ENCODE measurements at regions of chr17 and their contacts with region 1.

Region 1: GRCh38 chr17:59914274-59914854 is 21.4 kb downstream of the RPS6KB1 start:
- DNase-seq: no peak
- ATAC-seq: no peak
- H3K4me3 Mint-ChIP-seq: no peak overlapping the region
- H3K27ac Mint-ChIP-seq: no peak overlapping the region
- H3K4me1 Mint-ChIP-seq: no peaks in the 10 kb centered on the region
- H3K27me3 Mint-ChIP-seq: no peaks in the 10 kb centered on the region
- CTCF ChIP-seq: peak; percentile 69

Region 2: GRCh38 chr17:59668816-59669215 is 245.5 kb before region 1 on chr17:
- CTCF ChIA-PET with region 1: no interaction called
- POLR2A ChIA-PET with region 1: no interaction called
- intact Hi-C with region 1: no loop called
- DNase-seq: no peak
- ATAC-seq: no peak
- H3K4me3 Mint-ChIP-seq: no peak overlapping the region
- H3K27ac Mint-ChIP-seq: peak overlapping the region; percentile 57
- H3K4me1 Mint-ChIP-seq: peaks cover 31% of the 10 kb centered on the region
- H3K27me3 Mint-ChIP-seq: no peaks in the 10 kb centered on the region
- CTCF ChIP-seq: no peak

Region 3: GRCh38 chr17:59829217-59830006 is 85.0 kb before region 1 on chr17:
- CTCF ChIA-PET with region 1: no interaction called
- POLR2A ChIA-PET with region 1: no interaction called
- intact Hi-C with region 1: no loop called
- DNase-seq: peak; percentile 72
- ATAC-seq: peak; percentile 78
- H3K4me3 Mint-ChIP-seq: peak overlapping the region; percentile 89
- H3K27ac Mint-ChIP-seq: peak overlapping the region; percentile 97
- H3K4me1 Mint-ChIP-seq: peaks cover 73% of the 10 kb centered on the region
- H3K27me3 Mint-ChIP-seq: no peaks in the 10 kb centered on the region
- CTCF ChIP-seq: no peak

Region 4: DNA sequence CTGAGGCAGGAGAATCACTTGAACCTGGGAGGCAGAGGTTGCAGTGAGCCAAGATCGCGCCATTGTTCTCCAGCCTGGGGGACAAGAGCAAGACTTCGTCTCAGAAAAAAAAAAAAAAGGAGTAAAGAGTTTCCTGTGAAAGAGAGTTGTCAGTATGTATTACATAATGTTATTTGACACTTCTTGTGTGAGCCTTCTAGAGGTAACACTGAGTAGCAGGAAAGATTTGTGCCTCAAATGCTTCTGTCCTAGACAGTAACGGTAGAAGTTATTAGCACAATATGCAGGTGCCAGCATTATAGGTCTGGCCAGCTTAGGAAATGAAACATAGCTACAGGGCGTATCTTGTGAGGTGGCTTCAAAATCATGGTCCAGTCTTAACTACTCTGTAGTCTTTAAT is 15.3 kb before region 1 on chr17:
- CTCF ChIA-PET with region 1: interaction called, 16 read pairs
- POLR2A ChIA-PET with region 1: interaction called, 3 read pairs
- intact Hi-C with region 1: no loop called
- DNase-seq: no peak
- ATAC-seq: peak; percentile 81
- H3K4me3 Mint-ChIP-seq: no peak overlapping the region
- H3K27ac Mint-ChIP-seq: no peak overlapping the region
- H3K4me1 Mint-ChIP-seq: peaks cover 48% of the 10 kb centered on the region
- H3K27me3 Mint-ChIP-seq: no peaks in the 10 kb centered on the region
- CTCF ChIP-seq: peak; percentile 33

Region 5: GRCh38 chr17:59941131-59941530 is 26.8 kb after region 1 on chr17:
- CTCF ChIA-PET with region 1: interaction called, 18 read pairs
- POLR2A ChIA-PET with region 1: no interaction called
- intact Hi-C with region 1: no loop called
- DNase-seq: no peak
- ATAC-seq: peak; percentile 56
- H3K4me3 Mint-ChIP-seq: no peak overlapping the region
- H3K27ac Mint-ChIP-seq: peak overlapping the region; percentile 91
- H3K4me1 Mint-ChIP-seq: peaks cover 37% of the 10 kb centered on the region
- H3K27me3 Mint-ChIP-seq: no peaks in the 10 kb centered on the region
- CTCF ChIP-seq: no peak

Region 6: DNA sequence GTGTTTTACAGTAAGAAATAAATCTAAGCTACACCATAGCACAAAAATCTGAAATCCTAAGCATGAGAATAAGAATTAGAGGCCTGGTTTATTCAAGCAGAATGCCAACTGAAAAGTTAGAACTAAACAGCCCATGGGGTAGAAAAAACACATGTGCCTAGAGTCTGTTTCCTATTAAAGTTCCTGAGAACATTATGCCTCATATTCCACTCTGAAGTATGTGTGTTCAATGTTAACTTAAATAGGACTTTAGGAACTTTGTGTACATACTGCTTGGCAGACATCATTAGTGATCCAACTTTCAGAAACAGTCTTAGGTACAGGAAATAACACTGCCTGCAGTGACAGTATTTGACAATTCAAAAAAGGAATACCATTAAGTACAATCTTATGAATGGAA is 146.1 kb after region 1 on chr17:
- CTCF ChIA-PET with region 1: no interaction called
- POLR2A ChIA-PET with region 1: no interaction called
- intact Hi-C with region 1: no loop called
- DNase-seq: no peak
- ATAC-seq: no peak
- H3K4me3 Mint-ChIP-seq: no peak overlapping the region
- H3K27ac Mint-ChIP-seq: no peak overlapping the region
- H3K4me1 Mint-ChIP-seq: no peaks in the 10 kb centered on the region
- H3K27me3 Mint-ChIP-seq: no peaks in the 10 kb centered on the region
- CTCF ChIP-seq: no peak

Measured in activated CD8-positive, alpha-beta T cell treated with anti-CD3 and anti-CD28 coated beads for 36 hours (primary cell).